CD4-positive, alpha-beta memory T cell (primary cell): ENCODE measurements at regions of chr15 and their contacts with region 1.

Region 1: DNA sequence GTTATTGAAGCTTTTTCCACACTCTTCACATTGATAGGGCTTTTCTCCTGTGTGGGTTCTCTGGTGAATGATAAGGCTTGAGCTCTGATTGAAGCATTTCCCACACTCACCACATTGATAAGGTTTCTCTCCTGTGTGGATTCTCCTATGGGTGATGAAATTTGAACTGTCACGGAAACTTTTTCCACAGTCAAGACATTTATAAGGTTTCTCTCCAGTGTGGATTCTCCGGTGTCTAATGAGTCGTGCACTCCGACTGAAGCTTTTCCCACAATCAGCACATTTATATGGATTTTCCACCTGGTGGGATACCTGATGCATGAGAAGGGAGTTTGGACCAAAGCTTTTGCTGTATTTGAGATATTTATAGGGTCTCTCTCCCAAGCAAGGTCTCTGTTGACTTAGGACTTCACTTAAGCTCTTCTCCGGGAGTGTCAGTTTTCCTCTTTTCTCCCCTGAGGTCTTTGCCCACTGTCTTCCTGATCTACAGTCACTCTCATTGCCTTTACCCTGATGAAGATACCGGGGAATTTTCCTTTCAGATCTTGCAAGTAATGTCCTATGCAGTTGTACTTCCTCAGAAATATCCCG is 9.4 kb downstream of the ZSCAN29 start:
- DNase-seq: no peak
- H3K4me3 ChIP-seq: no peak overlapping the region
- H3K4me3 Mint-ChIP-seq: no peak overlapping the region
- H3K27ac ChIP-seq: no peak overlapping the region
- H3K27ac Mint-ChIP-seq: no peak overlapping the region
- H3K4me1 ChIP-seq: no peaks in the 10 kb centered on the region
- H3K4me1 Mint-ChIP-seq: peaks cover 3 to 19% (median 6%) of the 10 kb centered on the region in 4 donors
- H3K27me3 ChIP-seq: no peaks in the 10 kb centered on the region
- H3K27me3 Mint-ChIP-seq: no peaks in the 10 kb centered on the region

Region 2: DNA sequence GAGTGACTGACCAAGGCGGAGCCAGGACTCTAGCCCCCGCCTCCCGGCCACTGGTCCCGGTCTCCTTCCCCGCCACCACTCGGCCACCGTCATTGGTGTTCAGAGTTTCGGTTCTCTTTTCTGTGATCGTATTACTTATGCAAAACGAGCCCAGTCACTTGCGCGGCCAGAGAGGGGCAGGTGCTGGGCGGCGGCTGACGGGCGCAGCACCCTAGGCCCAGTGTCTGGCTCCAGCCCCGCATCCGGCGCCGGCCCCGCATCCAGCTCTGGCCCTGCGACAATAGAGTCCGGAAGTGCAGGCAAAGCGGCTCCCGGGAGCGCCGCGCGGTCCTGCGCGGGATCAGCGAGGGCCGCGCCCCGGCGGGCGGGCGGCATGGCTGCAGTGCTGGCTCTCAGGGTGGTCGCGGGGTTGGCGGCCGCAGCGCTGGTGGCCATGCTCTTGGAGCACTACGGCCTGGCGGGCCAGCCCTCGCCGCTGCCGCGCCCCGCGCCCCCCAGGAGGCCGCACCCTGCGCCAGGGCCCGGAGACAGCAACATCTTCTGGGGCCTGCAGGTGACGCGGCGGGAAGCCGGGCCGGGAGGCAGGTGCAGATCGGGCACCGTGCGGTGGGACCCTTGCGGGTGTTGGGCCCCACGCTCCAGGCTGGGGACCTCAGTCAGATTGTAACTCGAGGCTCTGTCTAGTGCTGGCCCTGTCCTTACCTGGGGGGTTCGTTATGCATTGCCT is 227.8 kb before region 1 on chr15 and contains the start of gene TMEM62:
- CTCF ChIA-PET with region 1: no interaction called
- POLR2A ChIA-PET with region 1: no interaction called
- intact Hi-C with region 1: no loop called
- DNase-seq: peak; percentile 47 to 66 (median 56)
- H3K4me3 ChIP-seq: peak within 1 kb of the TSS; percentile 81 to 88
- H3K4me3 Mint-ChIP-seq: peak within 1 kb of the TSS; percentile 90 to 98 (median 95)
- H3K27ac ChIP-seq: peak within 1 kb of the TSS; percentile 72
- H3K27ac Mint-ChIP-seq: peak within 1 kb of the TSS; percentile 83 to 97 (median 94)
- H3K4me1 ChIP-seq: peaks cover 18% of the 10 kb centered on the region
- H3K4me1 Mint-ChIP-seq: peaks cover 11 to 30% (median 22%) of the 10 kb centered on the region in 4 donors
- H3K27me3 ChIP-seq: no peaks in the 10 kb centered on the region
- H3K27me3 Mint-ChIP-seq: peaks cover 2% of the 10 kb centered on the region in 2 donors
- total RNA-seq, gene TMEM62: 14.3 to 17.4 TPM

Region 3: GRCh38 chr15:43346305-43346704 is 15.1 kb before region 1 on chr15:
- CTCF ChIA-PET with region 1: interaction called, 14 read pairs
- POLR2A ChIA-PET with region 1: no interaction called
- intact Hi-C with region 1: no loop called
- DNase-seq: no peak
- H3K4me3 ChIP-seq: no peak overlapping the region
- H3K4me3 Mint-ChIP-seq: no peak overlapping the region
- H3K27ac ChIP-seq: no peak overlapping the region
- H3K27ac Mint-ChIP-seq: no peak overlapping the region
- H3K4me1 ChIP-seq: no peaks in the 10 kb centered on the region
- H3K4me1 Mint-ChIP-seq: no peaks in the 10 kb centered on the region
- H3K27me3 ChIP-seq: no peaks in the 10 kb centered on the region
- H3K27me3 Mint-ChIP-seq: no peaks in the 10 kb centered on the region